Activated CD4-positive, alpha-beta T cell treated with anti-CD3 and anti-CD28 coated beads, Interleukin-2, amount 10 ng/mL, durations not matched to agents 24 days and 14 days (primary cell): ENCODE measurements at regions of chr9 and their contacts with region 1.

Region 1: GRCh38 chr9:120394058-120394669 is 185.8 kb downstream of the CDK5RAP2 start:
- DNase-seq: peak; percentile 86
- H3K4me3 Mint-ChIP-seq: peak overlapping the region; percentile 71
- H3K27ac Mint-ChIP-seq: peak overlapping the region; percentile 81
- H3K4me1 Mint-ChIP-seq: peaks cover 30% of the 10 kb centered on the region
- H3K27me3 Mint-ChIP-seq: no peaks in the 10 kb centered on the region

Region 2: DNA sequence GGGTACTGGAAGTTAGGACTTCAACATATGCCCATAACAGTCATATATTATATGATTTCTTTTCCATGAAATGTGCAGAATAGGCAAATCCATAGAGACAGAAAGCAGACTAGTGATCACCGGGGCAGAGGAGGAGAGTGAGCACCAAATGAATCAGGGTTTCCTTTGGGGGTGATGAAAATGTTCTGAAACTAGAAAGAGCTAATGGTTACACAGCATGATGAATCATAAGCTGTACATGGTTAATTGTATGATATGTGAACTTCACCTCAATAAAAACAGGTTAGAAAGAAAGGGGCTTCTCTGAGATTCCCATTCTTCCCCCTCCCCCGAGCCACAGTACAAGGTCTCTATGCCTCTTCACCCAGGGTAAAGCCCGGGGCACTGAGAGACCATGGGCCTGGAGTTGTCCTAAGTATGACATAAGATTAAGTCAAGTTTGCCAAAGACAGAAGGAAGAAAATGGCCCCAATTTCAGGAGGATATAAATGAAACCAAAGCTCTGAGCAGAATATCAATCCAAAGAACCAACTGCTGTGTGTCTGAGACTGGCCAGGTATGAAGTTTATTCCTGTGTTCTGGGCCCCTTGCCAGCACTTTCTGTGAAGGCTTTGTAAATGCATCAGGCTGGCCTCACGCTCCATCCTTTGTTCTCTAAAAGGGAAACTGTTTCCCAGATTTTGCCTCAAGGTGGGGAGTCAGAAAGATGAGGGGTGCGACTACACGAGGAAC is 58.0 kb before region 1 on chr9:
- intact Hi-C with region 1: loop called (anchors 5 kb)
- DNase-seq: no peak
- H3K4me3 Mint-ChIP-seq: no peak overlapping the region
- H3K27ac Mint-ChIP-seq: no peak overlapping the region
- H3K4me1 Mint-ChIP-seq: peaks cover 6% of the 10 kb centered on the region
- H3K27me3 Mint-ChIP-seq: peaks cover 4% of the 10 kb centered on the region

Region 3: DNA sequence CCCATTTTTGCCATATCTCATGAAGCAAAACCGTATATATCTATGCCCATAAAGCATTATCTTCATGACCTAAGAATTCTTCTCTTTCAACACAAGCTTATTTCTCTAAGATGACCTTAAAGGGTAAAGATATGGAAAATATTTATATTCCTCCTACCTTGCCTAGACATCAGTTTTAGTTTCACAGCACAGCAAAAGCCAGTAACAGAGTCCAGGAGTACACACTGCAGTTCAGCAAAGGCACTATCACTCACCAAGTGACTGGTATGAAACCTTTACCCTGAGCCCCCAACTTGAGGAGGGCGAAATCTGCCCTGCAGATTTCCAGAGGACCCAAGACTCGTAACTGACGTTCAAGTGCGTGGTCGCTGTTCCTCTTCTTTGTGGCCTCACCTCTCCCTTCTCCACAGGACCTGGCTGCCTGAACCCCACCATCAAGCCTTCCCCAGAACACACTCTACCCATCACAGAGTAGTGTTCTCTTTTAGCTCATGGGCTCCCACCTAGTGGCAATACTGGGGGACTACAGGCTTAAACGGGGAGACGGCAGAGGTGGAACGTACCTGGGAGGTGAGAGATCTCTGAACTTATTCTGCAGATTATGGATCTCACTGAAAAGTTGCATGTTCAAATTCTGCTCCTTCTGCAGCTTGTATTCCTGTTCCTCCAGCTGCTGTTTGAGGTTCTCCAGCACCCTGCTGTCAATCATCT is 44.8 kb after region 1 on chr9:
- intact Hi-C with region 1: loop called (anchors 2 kb)
- DNase-seq: peak; percentile 72
- H3K4me3 Mint-ChIP-seq: no peak overlapping the region
- H3K27ac Mint-ChIP-seq: peak overlapping the region; percentile 27
- H3K4me1 Mint-ChIP-seq: peaks cover 30% of the 10 kb centered on the region
- H3K27me3 Mint-ChIP-seq: no peaks in the 10 kb centered on the region

Region 4: DNA sequence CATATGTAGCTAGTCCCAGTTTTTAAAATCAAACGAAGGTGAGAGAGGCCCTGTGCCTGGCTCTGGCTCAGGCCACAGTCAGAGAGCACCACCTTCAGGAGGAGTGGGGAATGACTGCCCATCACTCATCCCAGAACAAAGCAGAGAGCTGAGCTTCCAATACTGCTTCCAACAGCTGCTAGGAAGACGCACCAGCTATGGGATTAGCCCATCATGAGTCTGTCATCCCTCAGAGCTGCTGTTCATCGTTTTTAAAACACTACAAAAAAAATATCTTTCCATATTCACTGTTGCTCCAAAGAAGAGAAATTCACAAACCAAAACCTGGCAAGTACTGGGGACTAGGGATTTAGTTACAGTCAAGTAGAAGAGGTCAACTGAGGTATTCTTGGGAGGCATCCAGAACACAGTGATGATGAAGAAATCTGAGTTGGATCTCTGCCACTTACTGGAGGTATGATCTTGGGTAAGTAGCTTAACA is 83.4 kb after region 1 on chr9:
- intact Hi-C with region 1: no loop called
- DNase-seq: peak; percentile 83
- H3K4me3 Mint-ChIP-seq: no peak overlapping the region
- H3K27ac Mint-ChIP-seq: peak overlapping the region; percentile 29
- H3K4me1 Mint-ChIP-seq: peaks cover 5% of the 10 kb centered on the region
- H3K27me3 Mint-ChIP-seq: no peaks in the 10 kb centered on the region

Region 5: DNA sequence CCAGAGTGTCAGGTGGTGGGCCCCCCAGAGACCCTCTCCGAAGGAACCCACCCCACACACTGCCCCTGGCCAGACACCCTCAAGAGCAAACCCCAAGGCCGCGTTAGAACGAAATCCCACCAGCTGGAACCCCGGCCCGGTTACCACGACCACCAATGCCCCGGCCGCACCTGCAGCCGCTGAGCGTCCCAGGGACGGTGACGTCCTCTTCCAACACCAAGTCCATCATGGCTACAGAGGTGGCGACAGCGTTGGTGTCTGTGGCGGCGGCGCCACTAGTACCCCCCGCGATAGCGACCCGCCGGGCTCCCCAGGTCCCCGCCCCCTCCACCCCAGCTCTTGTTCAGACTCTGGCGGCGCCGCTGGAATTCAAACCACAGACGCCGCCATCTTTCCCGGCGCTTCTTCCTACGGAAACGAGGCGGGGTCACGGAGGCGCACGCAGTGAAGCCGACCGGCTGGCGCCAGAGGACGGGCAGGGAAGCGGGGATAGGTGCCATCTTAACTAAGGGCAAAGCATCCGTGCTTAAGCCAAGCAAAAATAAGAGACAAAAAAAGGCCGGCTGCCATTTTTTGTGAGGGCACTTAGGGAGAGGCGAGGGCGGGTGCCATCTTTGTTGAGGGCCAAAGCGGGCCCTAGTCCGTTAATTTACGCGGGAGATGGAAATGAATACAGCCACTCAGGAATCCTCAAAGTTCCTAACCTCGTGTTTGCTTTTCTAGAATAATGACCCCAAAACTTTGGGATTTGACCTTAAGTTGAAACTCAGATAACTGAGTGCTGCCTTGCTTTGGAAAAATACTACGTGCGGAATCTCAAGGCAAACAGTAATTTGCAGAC is 185.8 kb after region 1 on chr9 and contains the start of gene CDK5RAP2:
- intact Hi-C with region 1: loop called (anchors 1 kb)
- DNase-seq: peak; percentile 98
- H3K4me3 Mint-ChIP-seq: peak within 1 kb of the TSS; percentile 98
- H3K27ac Mint-ChIP-seq: peak within 1 kb of the TSS; percentile 94
- H3K4me1 Mint-ChIP-seq: peaks cover 36% of the 10 kb centered on the region
- H3K27me3 Mint-ChIP-seq: no peaks in the 10 kb centered on the region
- total RNA-seq, gene CDK5RAP2: 69.3 and 70.0 TPM in 2 replicates